A549 (cell line): ENCODE measurements at regions of chr2 and their contacts with region 1.

Region 1: DNA sequence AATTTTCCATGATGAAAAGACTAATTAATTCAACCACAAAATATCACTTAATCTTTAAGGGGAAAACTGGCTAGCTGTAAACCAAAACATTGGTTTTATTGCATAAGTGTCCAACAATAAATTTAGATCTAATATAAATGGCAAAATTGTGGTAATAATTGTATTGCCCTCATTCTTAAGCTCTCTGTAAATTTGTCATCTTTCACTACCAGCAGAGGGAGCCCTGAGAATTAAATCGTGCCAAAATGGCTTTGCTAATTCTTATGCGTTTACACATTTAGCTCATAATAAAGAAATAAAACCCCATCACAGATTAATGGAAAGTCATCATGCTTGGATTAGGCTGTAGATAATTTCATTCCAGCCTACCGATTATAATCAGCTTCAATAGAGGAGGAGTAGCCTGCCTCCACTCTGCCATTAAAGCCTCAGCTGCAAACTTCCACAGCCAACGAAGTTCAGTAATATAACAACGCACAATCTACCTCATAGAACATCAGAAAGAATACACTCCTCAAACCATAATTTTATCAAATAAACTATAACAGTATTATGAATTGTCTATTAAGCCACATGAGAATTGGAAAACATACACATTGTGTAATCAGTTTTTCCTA is 70.0 kb upstream of the ATP5MC3 start:
- DNase-seq: peak; percentile 20 to 46
- ATAC-seq: peak; percentile 50 to 74; a peak in 3 of 6 replicates
- H3K4me3 ChIP-seq: no peak overlapping the region
- H3K27ac ChIP-seq: no peak overlapping the region
- H3K4me1 ChIP-seq: no peaks in the 10 kb centered on the region
- CTCF ChIP-seq: peak; percentile 81
- EP300 ChIP-seq: no peak
- POLR2A ChIP-seq: no peak
- RAD21 ChIP-seq: peak; percentile 51 to 54; a peak in 4 of 5 replicates

Region 2: GRCh38 chr2:175234153-175234552 is 17.4 kb before region 1 on chr2:
- CTCF ChIA-PET with region 1: interaction called, 10 read pairs
- POLR2A ChIA-PET with region 1: no interaction called
- DNase-seq: no peak
- ATAC-seq: no peak
- H3K4me3 ChIP-seq: no peak overlapping the region
- H3K27ac ChIP-seq: no peak overlapping the region
- H3K4me1 ChIP-seq: peaks cover 12% of the 10 kb centered on the region; the same call in 2 of the 3 replicates
- CTCF ChIP-seq: no peak
- EP300 ChIP-seq: no peak
- POLR2A ChIP-seq: no peak
- RAD21 ChIP-seq: no peak